ENCODE measurements at regions of chr2 and their contacts with region 1.

Region 1: GRCh38 chr2:179218848-179219594 is 45.6 kb downstream of the SESTD1 start:
- DNase-seq: peak; percentile 58 to 68 (median 64)
- ATAC-seq: peak; percentile 85 to 94 (median 87)
- H3K4me3 ChIP-seq: no peak overlapping the region
- H3K27ac ChIP-seq: no peak overlapping the region
- H3K4me1 ChIP-seq: peaks cover 0 to 36% (median 6%) of the 10 kb centered on the region in 12 donors
- H3K27me3 ChIP-seq: no peaks in the 10 kb centered on the region
- CTCF ChIP-seq: peak; percentile 82 to 94 (median 86)
- POLR2A ChIP-seq: no peak

Region 2: DNA sequence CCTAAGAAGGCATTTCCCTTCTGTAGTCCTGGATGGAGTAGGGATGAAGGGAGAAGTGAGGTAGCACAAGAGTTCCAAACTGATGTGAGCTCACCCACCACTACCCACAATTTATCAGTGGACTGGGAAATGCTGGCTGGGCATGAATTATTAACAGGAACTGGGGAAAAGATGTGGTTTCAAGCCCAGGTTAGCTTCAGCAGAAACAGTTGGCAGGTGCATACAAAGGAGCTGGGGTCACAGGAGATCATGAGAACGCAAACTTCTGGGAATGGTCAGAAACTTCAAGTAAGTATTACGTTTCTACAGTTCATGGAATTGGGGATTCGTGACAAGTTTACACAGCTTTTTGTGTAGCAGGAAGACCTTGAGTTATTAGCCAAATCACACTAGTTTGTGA is 174.5 kb before region 1 on chr2:
- intact Hi-C with region 1: no loop called
- DNase-seq: no peak
- ATAC-seq: no peak
- H3K4me3 ChIP-seq: no peak overlapping the region
- H3K27ac ChIP-seq: no peak overlapping the region
- H3K4me1 ChIP-seq: peaks cover 0 to 34% (median 3%) of the 10 kb centered on the region in 12 donors
- H3K27me3 ChIP-seq: no peaks in the 10 kb centered on the region
- CTCF ChIP-seq: no peak
- POLR2A ChIP-seq: no peak

Region 3: DNA sequence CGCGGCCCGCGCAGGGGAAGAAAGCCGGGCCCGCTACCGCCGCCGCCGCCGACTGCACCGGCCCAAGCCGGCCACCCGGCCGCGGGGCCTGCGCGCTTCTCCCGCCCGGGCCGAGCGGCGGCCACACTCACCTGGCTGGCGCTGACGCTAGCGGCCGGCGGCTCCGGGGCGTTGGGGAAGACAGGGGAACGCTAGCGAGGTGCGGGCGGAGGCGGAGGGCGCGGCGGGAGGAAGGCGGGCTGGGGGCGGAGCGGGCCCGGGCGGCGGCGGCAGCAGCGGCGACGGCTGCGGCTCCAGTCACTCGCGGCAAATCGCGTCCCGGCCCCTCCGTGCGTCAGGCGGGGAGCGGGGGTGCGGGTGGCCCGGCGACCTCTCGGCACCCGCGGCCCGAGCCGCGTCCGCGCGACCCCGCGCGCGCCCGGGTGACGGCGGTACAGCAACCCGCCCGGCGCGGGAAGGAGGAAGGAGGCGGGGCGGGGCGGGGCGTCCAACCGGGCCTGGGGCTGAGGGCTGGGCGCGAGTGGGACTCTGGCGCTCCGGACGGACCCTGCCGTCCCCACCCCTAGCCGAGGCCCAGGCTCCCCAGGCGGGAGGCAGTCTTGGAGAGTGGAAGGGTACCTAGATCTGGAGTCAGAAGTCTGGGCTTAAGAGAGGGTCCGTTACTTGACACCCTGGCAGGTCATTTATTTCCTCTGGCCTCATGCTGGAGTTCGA is 45.5 kb after region 1 on chr2 and contains the start of gene SESTD1:
- intact Hi-C with region 1: loop called in 2 of 10 experiments (anchors 5 to 10 kb)
- DNase-seq: peak; percentile 74 to 86 (median 80)
- ATAC-seq: peak; percentile 63 to 87 (median 86)
- H3K4me3 ChIP-seq: peak within 1 kb of the TSS; percentile 50 to 90 (median 78)
- H3K27ac ChIP-seq: peak within 1 kb of the TSS; percentile 66 to 94 (median 84)
- H3K4me1 ChIP-seq: peaks cover 0 to 37% (median 14%) of the 10 kb centered on the region in 12 donors
- H3K27me3 ChIP-seq: no peaks in the 10 kb centered on the region
- CTCF ChIP-seq: peak in 1 of 12 donors; percentile 2
- POLR2A ChIP-seq: peak in 1 of 2 donors; percentile 38
- total RNA-seq, gene SESTD1: 14.4 to 48.7 (median 32.6) TPM

Region 4: GRCh38 chr2:179340668-179341067 is 121.6 kb after region 1 on chr2:
- intact Hi-C with region 1: loop called in 9 of 10 experiments (anchors 1 to 10 kb)
- DNase-seq: no peak
- ATAC-seq: peak in 1 of 4 donors; percentile 43
- H3K4me3 ChIP-seq: no peak overlapping the region
- H3K27ac ChIP-seq: no peak overlapping the region
- H3K4me1 ChIP-seq: peaks cover 0 to 23% (median 3%) of the 10 kb centered on the region in 12 donors
- H3K27me3 ChIP-seq: no peaks in the 10 kb centered on the region
- CTCF ChIP-seq: peak in 7 of 12 donors; percentile 10 to 46 (median 34)
- POLR2A ChIP-seq: no peak

Region 5: GRCh38 chr2:179435000-179435399 is 216.0 kb after region 1 on chr2:
- intact Hi-C with region 1: loop called in 6 of 10 experiments (anchors 2 to 10 kb)
- DNase-seq: no peak
- ATAC-seq: no peak
- H3K4me3 ChIP-seq: no peak overlapping the region
- H3K27ac ChIP-seq: no peak overlapping the region
- H3K4me1 ChIP-seq: no peaks in the 10 kb centered on the region
- H3K27me3 ChIP-seq: peaks cover 0 to 11% (median 0%) of the 10 kb centered on the region in 9 donors
- CTCF ChIP-seq: no peak
- POLR2A ChIP-seq: no peak

Region 6: GRCh38 chr2:179440642-179441251 is 221.7 kb after region 1 on chr2:
- intact Hi-C with region 1: loop called in 7 of 10 experiments (anchors 2 to 10 kb)
- DNase-seq: no peak
- ATAC-seq: no peak
- H3K4me3 ChIP-seq: no peak overlapping the region
- H3K27ac ChIP-seq: no peak overlapping the region
- H3K4me1 ChIP-seq: peaks cover 0 to 11% (median 0%) of the 10 kb centered on the region in 12 donors
- H3K27me3 ChIP-seq: peaks cover 0 to 7% (median 0%) of the 10 kb centered on the region in 9 donors
- CTCF ChIP-seq: peak; percentile 39 to 77 (median 62)
- POLR2A ChIP-seq: no peak

Measured in heart left ventricle (tissue), 16 donors.